MCF 10A (cell line): ENCODE measurements at regions of chr2 and their contacts with region 1.

Region 1: GRCh38 chr2:205766779-205767359 is 84.6 kb downstream of the NRP2 start:
- DNase-seq: peak; percentile 70
- H3K4me3 Mint-ChIP-seq: no peak overlapping the region
- H3K27ac Mint-ChIP-seq: no peak overlapping the region
- H3K4me1 Mint-ChIP-seq: peaks cover 19% of the 10 kb centered on the region
- H3K27me3 Mint-ChIP-seq: no peaks in the 10 kb centered on the region
- CTCF ChIP-seq: peak; percentile 79

Region 2: GRCh38 chr2:205808486-205809121 is 41.7 kb after region 1 on chr2:
- CTCF ChIA-PET with region 1: interaction called, 4 read pairs
- POLR2A ChIA-PET with region 1: no interaction called
- intact Hi-C with region 1: loop called (anchors 1 kb)
- DNase-seq: peak; percentile 35
- H3K4me3 Mint-ChIP-seq: no peak overlapping the region
- H3K27ac Mint-ChIP-seq: no peak overlapping the region
- H3K4me1 Mint-ChIP-seq: peaks cover 5% of the 10 kb centered on the region
- H3K27me3 Mint-ChIP-seq: no peaks in the 10 kb centered on the region
- CTCF ChIP-seq: no peak

Region 3: GRCh38 chr2:205885492-205886099 is 118.7 kb after region 1 on chr2:
- CTCF ChIA-PET with region 1: interaction called, 3 read pairs
- POLR2A ChIA-PET with region 1: no interaction called
- intact Hi-C with region 1: loop called (anchors 5 kb)
- DNase-seq: peak; percentile 65
- H3K4me3 Mint-ChIP-seq: no peak overlapping the region
- H3K27ac Mint-ChIP-seq: no peak overlapping the region
- H3K4me1 Mint-ChIP-seq: no peaks in the 10 kb centered on the region
- H3K27me3 Mint-ChIP-seq: no peaks in the 10 kb centered on the region
- CTCF ChIP-seq: peak; percentile 81